Colonic mucosa (tissue), 4 donors: ENCODE measurements at regions of chrX and their contacts with region 1.

Region 1: DNA sequence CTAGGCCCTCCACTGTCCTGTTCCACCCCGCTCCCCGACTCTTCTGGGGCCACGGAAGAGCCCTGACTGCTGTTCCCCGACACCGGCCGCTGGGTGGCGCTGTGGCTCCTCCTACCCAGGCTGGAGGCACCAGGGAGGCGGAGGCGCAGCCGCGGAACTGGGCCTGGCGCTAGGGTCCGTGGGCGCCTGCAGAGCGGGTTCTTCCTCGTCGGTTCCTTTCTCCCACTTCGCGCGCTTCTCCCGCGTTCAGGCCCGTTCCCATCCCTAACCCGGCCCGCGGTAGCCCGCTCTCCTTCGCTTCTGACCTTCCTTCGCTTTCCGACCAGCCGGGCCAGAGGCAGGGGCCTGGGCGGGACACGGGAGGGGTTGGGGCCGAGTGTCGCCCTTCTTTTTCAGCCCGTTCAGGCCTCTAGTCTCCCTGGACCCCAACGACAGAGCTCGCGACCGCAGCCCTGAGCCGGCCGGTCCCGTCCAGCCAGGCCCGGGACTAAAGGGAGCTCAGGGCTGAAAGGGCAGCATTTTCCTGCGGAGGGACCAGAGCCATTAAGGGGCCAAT is 34.3 kb downstream of the NALF2 start:
- DNase-seq: peak; percentile 71
- H3K4me3 ChIP-seq: peak overlapping the region; percentile 38
- H3K27ac ChIP-seq: no peak overlapping the region
- H3K4me1 ChIP-seq: no peaks in the 10 kb centered on the region
- H3K27me3 ChIP-seq: no peaks in the 10 kb centered on the region
- CTCF ChIP-seq: peak; percentile 47

Region 2: GRCh38 chrX:69088171-69088938 is 450.0 kb before region 1 on chrX:
- intact Hi-C with region 1: no loop called
- DNase-seq: no peak
- H3K4me3 ChIP-seq: no peak overlapping the region
- H3K27ac ChIP-seq: no peak overlapping the region
- H3K4me1 ChIP-seq: no peaks in the 10 kb centered on the region
- H3K27me3 ChIP-seq: peaks cover 7% of the 10 kb centered on the region
- CTCF ChIP-seq: no peak

Region 3: DNA sequence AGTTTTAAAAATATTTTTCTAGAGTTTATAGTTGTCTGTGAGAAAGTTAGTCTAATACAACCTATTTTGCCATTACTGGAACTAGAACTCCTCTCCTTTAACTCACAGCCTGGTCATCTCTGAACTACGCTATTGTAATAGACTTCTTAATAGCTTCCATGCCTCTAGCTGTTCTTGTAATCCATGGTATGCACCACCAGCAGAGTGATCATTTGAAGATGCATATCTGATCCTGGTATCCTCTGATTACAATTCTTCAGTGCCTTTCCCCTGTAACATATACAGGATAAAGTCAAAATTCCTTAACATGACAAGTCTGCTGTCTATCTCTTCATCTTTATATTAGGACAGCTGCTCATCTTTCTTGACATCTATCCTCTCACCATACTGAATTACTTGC is 71.9 kb before region 1 on chrX:
- intact Hi-C with region 1: no loop called
- DNase-seq: no peak
- H3K4me3 ChIP-seq: no peak overlapping the region
- H3K27ac ChIP-seq: no peak overlapping the region
- H3K4me1 ChIP-seq: no peaks in the 10 kb centered on the region
- H3K27me3 ChIP-seq: no peaks in the 10 kb centered on the region
- CTCF ChIP-seq: no peak

Region 4: GRCh38 chrX:69618803-69619202 is 80.4 kb after region 1 on chrX:
- intact Hi-C with region 1: loop called (anchors 2 kb)
- DNase-seq: peak; percentile 18
- H3K4me3 ChIP-seq: no peak overlapping the region
- H3K27ac ChIP-seq: no peak overlapping the region
- H3K4me1 ChIP-seq: no peaks in the 10 kb centered on the region
- H3K27me3 ChIP-seq: no peaks in the 10 kb centered on the region
- CTCF ChIP-seq: peak; percentile 25

Region 5: DNA sequence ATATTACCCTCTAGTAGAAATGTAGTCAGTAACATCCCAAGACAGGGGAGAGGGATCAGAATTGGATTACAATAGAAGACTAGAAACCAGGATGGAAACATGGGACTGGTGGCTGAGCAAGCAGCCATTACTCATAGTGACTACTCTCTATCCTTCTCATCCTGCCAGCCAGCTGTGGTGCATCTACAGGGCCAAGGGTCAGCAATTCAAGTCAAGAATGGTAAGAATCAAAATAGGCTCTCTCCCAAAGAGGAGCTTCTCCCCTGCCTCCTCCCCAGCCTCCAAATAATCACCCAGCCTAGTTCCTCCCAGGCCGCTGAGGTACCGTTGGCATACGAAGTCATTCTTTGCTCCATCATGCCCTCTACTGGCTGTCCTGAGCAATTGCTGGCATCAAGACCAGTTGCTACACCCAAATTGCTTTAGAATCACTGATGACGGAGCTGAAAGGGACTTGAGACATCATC is 491.9 kb after region 1 on chrX:
- intact Hi-C with region 1: loop called (anchors 10 kb)
- DNase-seq: peak; percentile 29
- H3K4me3 ChIP-seq: no peak overlapping the region
- H3K27ac ChIP-seq: no peak overlapping the region
- H3K4me1 ChIP-seq: no peaks in the 10 kb centered on the region
- H3K27me3 ChIP-seq: no peaks in the 10 kb centered on the region
- CTCF ChIP-seq: peak; percentile 73